GM23248 (cell line): ENCODE measurements at regions of chr1 and their contacts with region 1.

Region 1: GRCh38 chr1:21397813-21398188 is 42.1 kb upstream of the NBPF3 start:
- DNase-seq: no peak
- H3K4me3 ChIP-seq: no peak overlapping the region
- H3K27ac ChIP-seq: no peak overlapping the region
- H3K4me1 ChIP-seq: no peaks in the 10 kb centered on the region
- H3K27me3 ChIP-seq: peaks cover 52% of the 10 kb centered on the region

Region 2: DNA sequence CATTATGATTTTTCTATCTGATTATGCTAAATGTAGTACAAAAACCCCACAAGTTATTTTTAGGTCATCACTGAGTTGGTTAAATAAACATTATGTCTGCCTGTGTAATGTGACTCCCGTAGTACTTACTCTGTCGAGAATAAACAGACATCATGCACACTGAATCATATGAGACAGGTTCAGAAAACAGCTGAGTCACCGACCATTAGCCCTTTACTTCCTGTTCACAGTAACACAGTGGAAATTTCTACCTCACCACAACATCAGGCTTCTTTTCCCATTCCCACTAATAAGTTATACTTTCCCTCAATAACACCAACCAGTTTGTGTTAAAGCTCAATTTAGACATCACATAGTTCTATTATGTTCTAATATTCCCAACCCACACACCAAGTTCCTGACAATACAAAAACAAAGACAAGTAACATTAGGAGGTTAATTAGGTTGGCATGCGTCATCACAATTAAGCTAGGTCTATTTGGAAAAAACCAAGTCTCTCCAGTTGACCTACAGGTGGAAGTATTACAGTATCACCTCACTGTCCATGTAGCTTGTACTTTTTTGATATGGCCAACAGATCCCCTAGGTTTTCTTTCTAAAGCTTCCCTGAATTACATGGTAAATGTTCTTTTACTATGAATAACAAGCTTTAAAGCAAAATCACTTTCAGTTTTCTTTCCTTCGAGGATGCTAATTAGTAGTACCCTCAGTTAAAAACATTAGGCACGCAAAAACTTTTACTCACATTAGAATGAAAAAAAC is 375.3 kb before region 1 on chr1:
- in situ Hi-C with region 1: no loop called
- DNase-seq: peak; percentile 98
- H3K4me3 ChIP-seq: peak overlapping the region; percentile 43
- H3K27ac ChIP-seq: peak overlapping the region; percentile 89
- H3K4me1 ChIP-seq: peaks cover 22% of the 10 kb centered on the region
- H3K27me3 ChIP-seq: no peaks in the 10 kb centered on the region

Region 3: DNA sequence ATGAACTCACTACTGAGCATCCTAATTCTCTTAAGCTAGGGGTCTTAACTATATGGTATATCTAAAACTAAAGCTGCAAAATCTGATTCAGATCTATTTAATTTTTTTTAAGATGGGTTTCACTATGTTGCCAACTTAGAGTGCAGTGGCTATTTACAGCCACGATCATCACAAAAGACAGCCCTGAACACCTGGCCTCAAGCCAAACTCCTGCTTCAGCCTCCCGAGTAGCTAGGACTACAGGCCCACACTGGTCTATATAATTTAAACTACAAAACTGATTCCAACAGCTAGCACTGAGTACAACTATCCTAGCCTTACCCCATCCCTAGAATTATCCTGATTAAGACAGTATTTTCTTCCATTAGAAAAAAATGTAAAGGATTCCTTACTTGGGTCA is 258.2 kb before region 1 on chr1:
- in situ Hi-C with region 1: no loop called
- DNase-seq: no peak
- H3K4me3 ChIP-seq: no peak overlapping the region
- H3K27ac ChIP-seq: no peak overlapping the region
- H3K4me1 ChIP-seq: no peaks in the 10 kb centered on the region
- H3K27me3 ChIP-seq: no peaks in the 10 kb centered on the region

Region 4: GRCh38 chr1:21368515-21369289 is 29.1 kb before region 1 on chr1:
- in situ Hi-C with region 1: no loop called
- DNase-seq: peak; percentile 90
- H3K4me3 ChIP-seq: no peak overlapping the region
- H3K27ac ChIP-seq: no peak overlapping the region
- H3K4me1 ChIP-seq: no peaks in the 10 kb centered on the region
- H3K27me3 ChIP-seq: no peaks in the 10 kb centered on the region

Region 5: GRCh38 chr1:21490774-21491553 is 93.2 kb after region 1 on chr1:
- in situ Hi-C with region 1: loop called (anchors 25 kb)
- DNase-seq: peak; percentile 86
- H3K4me3 ChIP-seq: no peak overlapping the region
- H3K27ac ChIP-seq: no peak overlapping the region
- H3K4me1 ChIP-seq: 0 out of 2 replicates have a peak, but pooled peaks cover 5% of the 10 kb centered on the region
- H3K27me3 ChIP-seq: peaks cover 25% of the 10 kb centered on the region